GM10248 (cell line): ENCODE measurements at regions of chr9 and their contacts with region 1.

Region 1: DNA sequence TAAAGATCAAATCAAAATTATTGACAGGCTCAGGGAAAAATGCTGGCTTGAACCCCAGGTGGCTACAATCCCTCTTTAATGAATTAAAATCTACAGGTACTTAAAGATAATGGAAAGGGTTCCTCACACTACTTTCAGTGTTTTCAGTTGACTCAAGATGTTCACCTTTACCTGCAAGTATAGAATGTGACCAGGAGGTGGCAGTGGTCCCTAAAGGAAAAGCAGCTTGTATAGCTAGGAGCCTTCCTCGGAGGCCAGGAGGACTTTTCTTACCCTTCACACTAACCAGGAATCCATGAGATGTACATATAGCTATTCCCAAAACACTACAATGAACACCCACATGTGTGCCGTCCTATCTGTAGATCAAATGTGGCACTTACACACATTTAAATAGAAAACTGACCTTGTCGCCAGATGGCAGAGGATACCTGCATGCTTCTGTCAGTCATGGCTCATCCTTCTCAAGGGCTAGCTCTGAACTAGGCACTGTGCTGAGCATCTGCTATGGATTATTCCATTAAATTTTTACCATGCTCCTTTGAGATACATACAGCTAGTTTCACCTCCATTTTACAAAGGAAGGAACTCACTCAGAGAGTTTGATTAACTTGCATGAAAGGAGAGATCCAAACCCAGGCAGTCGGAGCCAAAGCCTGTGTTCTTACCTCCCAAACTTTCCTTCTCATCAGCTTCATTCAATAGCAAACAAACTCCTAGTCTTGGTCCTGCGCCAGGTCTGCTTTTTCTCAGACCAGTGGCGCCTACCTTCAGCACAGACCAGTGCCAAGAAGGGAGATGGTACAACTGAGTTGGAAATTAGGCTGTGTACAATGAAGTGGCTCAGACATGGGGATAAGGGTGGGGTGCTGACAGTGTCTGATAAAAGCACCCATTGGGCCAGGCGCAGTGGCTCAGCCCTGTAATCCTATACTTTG is 24.5 kb downstream of the C9orf152 start:
- DNase-seq: peak; percentile 69
- CTCF ChIP-seq: peak; percentile 72

Region 2: DNA sequence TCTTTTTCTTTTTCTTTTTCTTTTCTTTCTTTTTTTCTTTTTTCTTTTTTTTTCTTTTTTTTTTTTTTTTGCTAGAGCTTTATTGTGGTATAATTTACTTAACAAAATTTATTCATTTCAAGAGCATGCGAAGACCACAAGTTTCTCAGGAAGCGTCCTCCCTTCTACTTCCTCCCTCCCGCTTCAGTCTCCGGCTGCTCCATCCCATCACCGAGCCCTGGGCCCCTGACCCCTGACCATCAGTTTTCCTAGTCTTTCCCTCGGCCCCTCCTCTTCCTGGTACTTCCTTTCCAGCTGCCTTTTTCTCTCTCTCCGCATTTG is 10.2 kb before region 1 on chr9:
- CTCF ChIA-PET with region 1: interaction called, 13 read pairs
- POLR2A ChIA-PET with region 1: no interaction called
- DNase-seq: no peak
- CTCF ChIP-seq: no peak

Region 3: GRCh38 chr9:110217656-110218099 is 34.2 kb after region 1 on chr9:
- CTCF ChIA-PET with region 1: interaction called, 24 read pairs
- POLR2A ChIA-PET with region 1: no interaction called
- DNase-seq: peak; percentile 41
- CTCF ChIP-seq: peak; percentile 70

Region 4: GRCh38 chr9:110526426-110526825 is 342.9 kb after region 1 on chr9:
- CTCF ChIA-PET with region 1: no interaction called
- POLR2A ChIA-PET with region 1: no interaction called
- DNase-seq: no peak
- CTCF ChIP-seq: no peak

Region 5: GRCh38 chr9:110623462-110624025 is 440.1 kb after region 1 on chr9:
- CTCF ChIA-PET with region 1: interaction called, 19 read pairs
- POLR2A ChIA-PET with region 1: no interaction called
- DNase-seq: peak; percentile 35
- CTCF ChIP-seq: peak; percentile 62